ENCODE measurements at regions of chr6 and their contacts with region 1.

Region 1: DNA sequence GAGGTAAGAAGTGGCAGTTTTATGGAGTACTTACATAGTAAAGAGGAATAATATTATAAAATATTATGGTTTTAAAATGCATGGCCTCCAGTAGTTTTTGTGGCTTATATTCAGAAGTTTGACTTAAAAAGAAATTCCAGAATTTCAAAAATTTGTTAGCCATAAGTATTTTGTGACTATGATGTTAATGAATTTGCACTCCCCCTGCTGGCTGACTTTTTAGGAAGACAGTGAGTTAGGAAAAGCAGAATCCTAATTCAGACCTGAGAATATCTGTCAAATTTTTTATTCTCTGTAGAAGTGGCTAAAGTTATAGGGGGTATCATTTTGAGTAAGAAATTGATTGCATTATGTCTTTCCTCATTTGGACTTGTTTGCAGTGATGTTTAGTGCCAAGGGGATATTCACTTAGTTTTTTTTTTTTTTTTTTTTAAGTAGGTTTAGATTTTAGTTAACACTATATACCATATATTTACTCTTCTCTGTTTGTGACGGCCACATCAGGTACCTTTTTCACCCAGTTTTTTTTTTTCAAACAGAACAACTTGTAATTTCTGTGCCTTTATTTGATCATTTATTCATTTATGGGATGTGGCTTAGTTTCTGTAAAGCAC is 40.8 kb downstream of the ZFAND3 start:
- DNase-seq: peak; percentile 67
- H3K4me3 Mint-ChIP-seq: no peak overlapping the region
- H3K27ac Mint-ChIP-seq: no peak overlapping the region
- H3K4me1 Mint-ChIP-seq: peaks cover 31% of the 10 kb centered on the region
- H3K27me3 Mint-ChIP-seq: no peaks in the 10 kb centered on the region

Region 2: GRCh38 chr6:37819177-37819823 is 41.0 kb before region 1 on chr6 and contains the start of gene ZFAND3:
- intact Hi-C with region 1: loop called (anchors 2 kb)
- DNase-seq: peak; percentile 98
- H3K4me3 Mint-ChIP-seq: peak within 1 kb of the TSS; percentile 99
- H3K27ac Mint-ChIP-seq: peak within 1 kb of the TSS; percentile 97
- H3K4me1 Mint-ChIP-seq: peaks cover 31% of the 10 kb centered on the region
- H3K27me3 Mint-ChIP-seq: peaks cover 5% of the 10 kb centered on the region
- total RNA-seq, gene ZFAND3: 31.5 and 39.6 TPM in 2 replicates

Region 3: DNA sequence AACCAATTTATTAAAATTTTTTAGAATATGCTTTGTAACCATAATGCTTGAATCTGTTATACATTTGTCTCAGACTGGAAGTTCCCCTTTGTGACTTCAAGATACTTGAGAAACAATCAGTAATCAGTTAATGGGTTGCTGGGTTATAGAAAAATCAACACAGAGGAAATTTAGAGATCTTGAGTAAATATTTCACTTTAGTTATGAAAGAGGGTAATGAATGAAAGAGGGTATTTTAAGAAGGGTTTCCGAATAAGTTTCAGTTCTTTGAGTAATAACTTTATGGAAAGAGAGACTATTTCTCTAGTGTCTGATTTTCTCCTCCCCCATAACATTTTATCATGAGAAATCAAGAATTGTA is 19.4 kb before region 1 on chr6:
- intact Hi-C with region 1: loop called (anchors 2 kb)
- DNase-seq: no peak
- H3K4me3 Mint-ChIP-seq: no peak overlapping the region
- H3K27ac Mint-ChIP-seq: no peak overlapping the region
- H3K4me1 Mint-ChIP-seq: peaks cover 22% of the 10 kb centered on the region
- H3K27me3 Mint-ChIP-seq: no peaks in the 10 kb centered on the region

Measured in activated CD4-positive, alpha-beta T cell treated with anti-CD3 and anti-CD28 coated beads, Interleukin-2, amount 10 ng/mL, durations not matched to agents 24 days and 14 days (primary cell).